Activated naive CD4-positive, alpha-beta T cell treated with anti-CD3 and anti-CD28 coated beads for 36 hours (primary cell): ENCODE measurements at regions of chr5 and their contacts with region 1.

Region 1: DNA sequence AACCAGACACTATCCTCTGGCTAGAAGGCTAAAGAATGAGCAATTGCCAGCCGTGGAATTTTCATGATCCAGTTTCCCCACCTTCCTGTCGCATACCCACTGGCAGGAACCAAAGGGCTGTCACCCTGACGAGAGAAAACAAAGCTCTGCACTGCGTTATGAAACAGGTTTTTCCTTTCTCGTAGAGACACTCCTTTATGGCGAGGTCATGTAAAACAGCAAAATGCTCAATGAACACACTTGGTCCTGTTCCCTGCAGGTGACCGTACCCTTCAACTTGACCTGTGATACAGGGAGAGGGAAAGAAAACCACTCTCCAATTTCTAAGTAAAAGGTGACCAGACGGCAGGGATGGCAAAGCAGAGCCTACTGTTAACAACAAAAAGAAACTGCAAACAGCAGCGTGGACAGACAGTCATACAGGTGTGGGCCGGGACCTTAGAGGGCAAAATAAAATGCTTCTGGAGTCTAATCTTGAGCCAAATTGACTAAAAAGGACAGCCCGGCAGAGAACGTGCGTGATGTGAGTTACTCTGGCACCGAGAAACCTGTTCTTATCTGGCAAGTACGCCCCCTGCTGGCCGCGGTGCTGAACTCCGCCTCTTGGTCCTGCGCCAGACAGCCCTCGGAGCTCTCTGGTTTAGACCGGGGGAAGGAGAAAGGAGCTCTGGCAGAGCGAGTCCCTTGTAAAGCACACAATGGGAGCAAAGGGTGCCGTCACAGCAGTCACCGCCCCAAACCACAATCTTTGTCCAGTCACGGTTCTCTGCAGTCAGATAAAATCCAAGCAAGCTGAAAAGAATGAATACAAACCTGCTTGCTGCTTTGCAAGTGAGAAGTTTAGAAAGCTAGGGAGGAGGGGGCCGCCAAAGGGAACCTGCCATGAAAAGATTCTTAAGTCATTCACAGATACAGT is 98.9 kb downstream of the EFNA5 start:
- DNase-seq: peak; percentile 92
- H3K4me3 Mint-ChIP-seq: peak overlapping the region; percentile 60
- H3K27ac Mint-ChIP-seq: no peak overlapping the region
- H3K4me1 Mint-ChIP-seq: peaks cover 14% of the 10 kb centered on the region
- H3K27me3 Mint-ChIP-seq: peaks cover 14% of the 10 kb centered on the region

Region 2: GRCh38 chr5:107389130-107389774 is 182.6 kb before region 1 on chr5:
- CTCF ChIA-PET with region 1: interaction called, 3 read pairs
- intact Hi-C with region 1: loop called (anchors 2 kb)
- DNase-seq: peak; percentile 19
- H3K4me3 Mint-ChIP-seq: no peak overlapping the region
- H3K27ac Mint-ChIP-seq: no peak overlapping the region
- H3K4me1 Mint-ChIP-seq: peaks cover 18% of the 10 kb centered on the region
- H3K27me3 Mint-ChIP-seq: no peaks in the 10 kb centered on the region

Region 3: GRCh38 chr5:107486489-107486888 is 85.4 kb before region 1 on chr5:
- CTCF ChIA-PET with region 1: no interaction called
- intact Hi-C with region 1: loop called (anchors 5 kb)
- DNase-seq: peak; percentile 60
- H3K4me3 Mint-ChIP-seq: no peak overlapping the region
- H3K27ac Mint-ChIP-seq: no peak overlapping the region
- H3K4me1 Mint-ChIP-seq: peaks cover 15% of the 10 kb centered on the region
- H3K27me3 Mint-ChIP-seq: peaks cover 6% of the 10 kb centered on the region

Region 4: DNA sequence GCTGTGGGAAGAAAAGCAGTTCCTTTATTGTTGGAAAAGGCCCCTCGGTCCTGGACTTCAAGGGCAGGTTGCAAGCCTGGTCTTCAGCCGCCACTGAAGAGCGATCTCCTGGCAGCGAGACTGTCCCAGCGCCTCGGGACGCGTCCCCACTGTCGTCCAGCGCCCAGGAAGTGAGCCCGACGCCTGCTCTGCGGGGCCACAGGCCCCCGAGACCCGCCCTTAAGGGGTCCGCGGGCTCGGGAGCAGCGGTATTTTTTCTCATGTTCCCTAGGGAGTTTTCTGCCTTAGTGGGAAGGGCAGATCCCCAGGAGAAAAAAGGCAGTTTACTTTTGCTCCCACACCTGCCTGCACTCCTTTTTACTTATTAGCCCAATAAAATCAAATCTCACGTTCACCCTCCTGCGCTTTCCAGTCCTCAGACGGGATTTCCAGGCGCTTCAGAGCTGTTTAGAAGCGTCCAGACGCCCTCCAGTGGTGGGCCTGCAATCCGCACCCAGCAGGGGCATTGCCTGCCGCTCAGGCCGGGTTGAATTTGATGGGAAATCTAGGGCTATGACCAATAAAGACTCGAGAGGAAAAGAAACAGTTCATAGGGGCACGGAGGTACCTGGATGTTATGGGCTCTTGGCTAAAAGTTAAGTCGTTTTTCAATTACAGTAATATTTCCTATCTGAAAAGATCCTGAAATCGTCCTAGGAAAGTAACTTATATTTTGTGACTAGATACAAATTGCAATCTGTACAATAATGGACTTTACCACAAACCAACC is 101.7 kb after region 1 on chr5:
- CTCF ChIA-PET with region 1: interaction called, 5 read pairs
- intact Hi-C with region 1: loop called (anchors 2 kb)
- DNase-seq: peak; percentile 88
- H3K4me3 Mint-ChIP-seq: peak overlapping the region; percentile 71
- H3K27ac Mint-ChIP-seq: no peak overlapping the region
- H3K4me1 Mint-ChIP-seq: peaks cover 29% of the 10 kb centered on the region
- H3K27me3 Mint-ChIP-seq: peaks cover 58% of the 10 kb centered on the region